Activated naive CD4-positive, alpha-beta T cell treated with anti-CD3 and anti-CD28 coated beads for 36 hours (primary cell): ENCODE measurements at regions of chr1 and their contacts with region 1.

Region 1: DNA sequence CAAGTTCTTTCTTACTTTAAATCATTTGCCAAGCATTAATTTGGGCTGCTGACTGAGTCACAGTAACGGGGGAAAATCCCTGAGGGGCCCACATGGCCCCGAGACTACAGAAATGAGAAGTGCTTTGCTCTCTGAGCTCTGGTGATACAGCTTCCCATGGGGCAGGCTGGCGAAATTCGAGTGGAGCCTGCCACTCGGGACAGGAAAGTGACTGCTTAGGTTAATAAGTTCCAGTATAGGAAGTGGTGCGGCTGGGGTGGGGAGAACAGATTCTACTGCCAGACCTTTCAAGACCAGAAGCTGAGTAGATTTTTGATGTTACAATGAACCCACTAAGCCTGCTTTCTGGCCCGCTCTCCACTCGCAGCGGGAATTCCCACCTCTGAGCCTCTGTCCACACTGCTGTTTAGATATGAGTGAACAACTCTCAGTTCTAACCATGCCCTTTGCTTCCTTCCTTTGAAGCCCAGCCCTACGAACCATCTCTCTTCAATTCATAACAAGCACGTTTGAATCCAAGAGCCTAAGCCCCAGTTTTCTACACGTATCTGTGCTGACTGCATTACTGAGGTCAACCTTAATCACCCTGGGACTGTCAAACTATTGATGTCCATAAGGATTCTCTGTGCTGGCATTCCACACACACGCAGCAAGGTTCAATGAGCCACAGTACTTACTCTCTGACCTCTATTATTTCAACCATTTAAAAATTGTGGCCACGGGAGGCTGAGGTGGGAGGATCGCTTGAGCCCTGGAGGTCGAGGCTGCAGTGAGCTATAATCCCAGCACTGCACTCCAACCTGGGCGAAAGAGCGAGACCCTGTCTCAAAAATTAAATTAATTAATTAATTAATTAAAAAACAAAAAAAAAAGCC is 9.6 kb downstream of the ZBTB17 start:
- DNase-seq: peak; percentile 94
- H3K4me3 Mint-ChIP-seq: peak overlapping the region; percentile 68
- H3K27ac Mint-ChIP-seq: peak overlapping the region; percentile 97
- H3K4me1 Mint-ChIP-seq: peaks cover 80% of the 10 kb centered on the region
- H3K27me3 Mint-ChIP-seq: no peaks in the 10 kb centered on the region

Region 2: DNA sequence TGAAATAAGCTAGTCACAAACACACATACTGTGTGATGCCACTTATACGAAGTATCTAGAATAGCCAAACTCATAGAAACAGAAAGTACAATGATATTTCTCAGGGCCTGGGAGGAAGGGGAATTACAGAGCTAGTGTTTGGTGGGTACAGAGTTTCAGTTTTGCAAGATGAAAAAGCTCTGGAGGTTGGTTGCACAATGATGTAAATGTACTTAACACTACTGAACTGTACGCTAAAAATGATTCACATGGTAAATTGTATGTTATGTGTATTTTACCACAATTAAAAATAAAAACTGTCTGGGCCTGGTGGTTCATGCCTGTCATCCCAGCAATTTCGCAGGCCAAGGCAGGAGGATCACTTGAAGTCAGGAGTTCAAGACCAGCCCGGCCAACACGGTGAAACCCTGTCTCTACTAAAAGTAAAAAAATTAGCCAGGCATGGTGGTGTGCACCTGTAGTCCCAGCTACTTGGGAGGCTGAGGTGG is 734.6 kb before region 1 on chr1:
- CTCF ChIA-PET with region 1: no interaction called
- intact Hi-C with region 1: loop called (anchors 5 kb)
- DNase-seq: peak; percentile 50
- H3K4me3 Mint-ChIP-seq: no peak overlapping the region
- H3K27ac Mint-ChIP-seq: no peak overlapping the region
- H3K4me1 Mint-ChIP-seq: peaks cover 21% of the 10 kb centered on the region
- H3K27me3 Mint-ChIP-seq: peaks cover 7% of the 10 kb centered on the region

Region 3: GRCh38 chr1:15409388-15410222 is 556.7 kb before region 1 on chr1 and contains the start of gene EFHD2:
- CTCF ChIA-PET with region 1: no interaction called
- intact Hi-C with region 1: loop called (anchors 10 kb)
- DNase-seq: peak; percentile 79
- H3K4me3 Mint-ChIP-seq: peak within 1 kb of the TSS; percentile 90
- H3K27ac Mint-ChIP-seq: peak within 1 kb of the TSS; percentile 81
- H3K4me1 Mint-ChIP-seq: peaks cover 24% of the 10 kb centered on the region
- H3K27me3 Mint-ChIP-seq: peaks cover 2% of the 10 kb centered on the region
- total RNA-seq, gene EFHD2: 35.0 to 36.0 TPM

Region 4: DNA sequence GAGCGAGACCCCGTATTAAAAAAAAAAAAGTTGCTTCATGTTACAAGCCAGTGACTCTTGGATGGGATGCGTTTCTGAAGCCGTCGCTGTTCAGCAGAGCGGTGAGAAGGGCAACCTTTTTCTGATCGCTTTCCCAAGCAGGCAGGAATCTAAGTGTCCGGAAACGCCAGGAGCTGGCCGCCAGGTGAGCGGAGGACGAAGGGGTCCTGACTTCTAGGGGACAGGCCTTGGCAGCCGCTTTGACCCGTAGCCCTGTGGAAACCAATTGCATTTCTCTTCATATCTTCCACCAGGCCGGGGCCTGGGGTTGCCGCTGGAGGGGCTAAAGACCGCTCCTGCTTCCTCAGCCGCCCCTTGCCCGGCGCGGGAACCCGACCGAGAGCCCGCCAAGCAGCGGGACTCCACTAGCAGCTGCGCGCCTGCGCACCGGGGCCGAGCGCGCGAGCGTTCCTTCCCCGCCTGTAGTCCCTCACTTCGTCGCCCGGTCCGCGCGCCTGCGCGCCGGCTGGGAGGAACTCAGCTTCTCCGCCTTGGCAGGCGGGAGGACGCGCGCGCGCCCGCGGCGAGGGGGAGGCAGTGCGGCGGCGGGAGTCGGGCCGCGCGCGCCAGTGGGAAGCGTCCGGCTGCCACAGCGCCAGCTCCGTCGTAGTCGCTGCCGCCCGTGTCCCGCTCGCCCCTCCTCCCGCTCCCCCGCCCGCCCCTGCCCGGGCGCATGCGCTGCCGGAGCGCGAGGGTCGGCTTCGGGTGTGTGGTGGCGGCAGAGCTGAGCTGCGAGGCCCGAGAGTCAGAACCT is 119.0 kb before region 1 on chr1 and contains the start of gene SPEN:
- CTCF ChIA-PET with region 1: no interaction called
- intact Hi-C with region 1: loop called (anchors 1 kb)
- DNase-seq: peak; percentile 97
- H3K4me3 Mint-ChIP-seq: peak within 1 kb of the TSS; percentile 97
- H3K27ac Mint-ChIP-seq: peak within 1 kb of the TSS; percentile 97
- H3K4me1 Mint-ChIP-seq: peaks cover 44% of the 10 kb centered on the region
- H3K27me3 Mint-ChIP-seq: no peaks in the 10 kb centered on the region
- total RNA-seq, gene SPEN: 30.7 to 33.7 TPM

Region 5: GRCh38 chr1:15918962-15919715 is 47.2 kb before region 1 on chr1:
- CTCF ChIA-PET with region 1: no interaction called
- intact Hi-C with region 1: loop called (anchors 1 kb)
- DNase-seq: peak; percentile 82
- H3K4me3 Mint-ChIP-seq: no peak overlapping the region
- H3K27ac Mint-ChIP-seq: no peak overlapping the region
- H3K4me1 Mint-ChIP-seq: peaks cover 43% of the 10 kb centered on the region
- H3K27me3 Mint-ChIP-seq: no peaks in the 10 kb centered on the region

Region 6: GRCh38 chr1:15956150-15956549 is 10.2 kb before region 1 on chr1:
- CTCF ChIA-PET with region 1: interaction called, 6 read pairs
- intact Hi-C with region 1: loop called (anchors 1 kb)
- DNase-seq: no peak
- H3K4me3 Mint-ChIP-seq: no peak overlapping the region
- H3K27ac Mint-ChIP-seq: peak overlapping the region; percentile 66
- H3K4me1 Mint-ChIP-seq: peaks cover 95% of the 10 kb centered on the region
- H3K27me3 Mint-ChIP-seq: no peaks in the 10 kb centered on the region

Region 7: DNA sequence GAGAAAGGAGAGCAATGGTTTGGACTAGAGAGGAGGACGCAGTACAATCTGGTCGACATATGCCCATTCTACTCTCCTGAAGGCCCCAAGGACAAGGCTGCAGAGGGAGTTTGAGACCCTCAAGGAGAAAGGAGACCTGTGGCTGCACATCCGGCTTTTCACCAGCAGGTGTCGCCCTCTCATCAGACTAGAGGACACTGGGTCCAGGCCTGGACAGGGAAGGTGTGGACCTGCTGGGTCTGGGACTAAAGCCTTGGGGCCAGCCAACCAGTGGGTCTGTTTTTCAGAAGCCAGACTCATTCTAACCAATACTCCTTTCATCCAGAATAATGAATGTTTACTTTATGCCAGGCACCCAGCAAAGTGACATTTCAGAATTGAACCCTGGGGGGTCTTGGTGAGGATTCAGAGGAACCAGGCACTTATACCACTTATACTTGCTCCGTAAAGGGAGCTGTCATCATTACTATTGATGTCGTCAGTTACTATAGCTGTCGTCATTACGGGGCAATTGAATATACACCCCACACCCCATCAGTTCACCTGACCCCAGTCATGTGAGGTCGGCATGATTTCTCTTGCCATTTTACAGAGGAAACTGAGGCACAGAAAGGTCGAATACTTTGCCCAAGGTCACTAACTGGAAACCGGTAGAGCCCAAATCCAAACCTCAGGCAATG is 42.9 kb after region 1 on chr1:
- CTCF ChIA-PET with region 1: no interaction called
- intact Hi-C with region 1: no loop called
- DNase-seq: peak; percentile 85
- H3K4me3 Mint-ChIP-seq: no peak overlapping the region
- H3K27ac Mint-ChIP-seq: no peak overlapping the region
- H3K4me1 Mint-ChIP-seq: peaks cover 14% of the 10 kb centered on the region
- H3K27me3 Mint-ChIP-seq: peaks cover 2% of the 10 kb centered on the region